Endothelial cell of umbilical vein (primary cell): ENCODE measurements at regions of chr15 and their contacts with region 1.

Region 1: DNA sequence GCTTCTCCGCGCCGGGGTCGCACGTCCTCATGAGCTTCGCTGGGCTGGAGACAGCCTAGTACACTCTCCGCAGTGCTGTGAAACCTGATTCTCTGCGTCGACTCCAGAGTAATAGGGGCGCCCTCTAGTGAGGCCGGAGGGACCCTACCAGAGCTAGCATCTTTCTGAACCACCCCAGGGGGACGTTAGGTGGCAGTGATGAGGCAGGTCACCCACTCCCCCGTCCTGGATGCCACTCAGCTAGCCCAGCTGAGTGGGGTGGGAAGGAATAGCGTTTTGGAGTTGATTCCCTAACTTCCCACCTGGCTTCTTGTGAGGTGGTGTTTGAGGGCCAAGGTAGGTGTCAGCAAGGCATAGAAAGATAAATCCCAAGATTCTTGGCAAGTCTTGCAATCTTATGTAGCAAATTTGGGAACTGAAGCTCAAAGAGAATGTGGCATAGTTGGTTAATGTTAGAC is 4.0 kb downstream of the DUOXA2 start:
- DNase-seq: peak; percentile 92
- H3K4me3 ChIP-seq: peak overlapping the region in 1 of 3 experiments; percentile 22
- H3K27ac ChIP-seq: no peak overlapping the region
- H3K4me1 ChIP-seq: peaks cover 10% of the 10 kb centered on the region
- H3K27me3 ChIP-seq: peaks cover 46 to 47% of the 10 kb centered on the region in 2 experiments
- CTCF ChIP-seq: peak; percentile 100
- POLR2A ChIP-seq: no peak

Region 2: DNA sequence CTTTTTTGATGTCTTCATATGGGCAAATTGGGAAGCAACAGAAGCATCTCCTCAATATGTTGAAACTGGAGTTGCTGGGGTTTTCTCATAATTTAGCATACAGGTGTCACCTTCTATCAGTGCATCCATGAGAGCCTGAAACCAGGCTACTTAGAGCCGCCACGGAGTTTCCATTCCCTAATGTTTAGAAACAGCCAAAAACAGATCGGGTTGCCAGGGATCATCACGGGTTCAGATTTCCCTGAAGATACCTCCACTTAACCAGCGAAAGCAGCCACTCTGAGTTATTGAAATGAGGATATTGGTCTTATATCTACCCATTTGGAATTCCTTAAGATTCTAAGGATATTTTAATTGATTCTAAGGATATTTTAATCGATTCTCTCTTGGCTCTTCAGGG is 147.1 kb before region 1 on chr15:
- CTCF ChIA-PET with region 1: interaction called, 45 read pairs
- POLR2A ChIA-PET with region 1: no interaction called
- dilution Hi-C with region 1: no loop called
- intact Hi-C with region 1: loop called (anchors 5 kb)
- DNase-seq: no peak
- H3K4me3 ChIP-seq: no peak overlapping the region
- H3K27ac ChIP-seq: no peak overlapping the region
- H3K4me1 ChIP-seq: no peaks in the 10 kb centered on the region
- H3K27me3 ChIP-seq: no peaks in the 10 kb centered on the region
- CTCF ChIP-seq: no peak
- POLR2A ChIP-seq: no peak

Region 3: DNA sequence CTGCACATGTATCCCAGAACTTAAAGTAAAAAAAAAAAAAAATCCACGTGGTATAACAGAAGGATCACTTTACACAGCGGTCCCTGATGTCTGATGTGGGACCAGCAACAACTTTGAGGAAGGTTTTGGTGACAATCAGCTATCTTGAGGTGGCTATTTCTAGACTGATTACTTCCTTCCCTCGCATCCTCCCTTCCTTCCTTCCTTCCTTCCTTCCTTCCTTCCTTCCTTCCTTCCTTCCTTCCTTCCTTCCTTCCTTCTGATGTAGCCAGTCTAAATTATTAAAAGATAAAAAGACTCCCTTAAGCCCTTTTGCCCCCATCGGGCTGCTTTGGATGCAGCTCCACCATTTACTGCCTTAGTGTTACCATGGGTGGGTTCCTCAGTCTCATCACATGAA is 80.2 kb before region 1 on chr15:
- CTCF ChIA-PET with region 1: interaction called, 10 read pairs
- POLR2A ChIA-PET with region 1: no interaction called
- dilution Hi-C with region 1: no loop called
- intact Hi-C with region 1: loop called (anchors 5 kb)
- DNase-seq: no peak
- H3K4me3 ChIP-seq: no peak overlapping the region
- H3K27ac ChIP-seq: no peak overlapping the region
- H3K4me1 ChIP-seq: peaks cover 5% of the 10 kb centered on the region
- H3K27me3 ChIP-seq: no peaks in the 10 kb centered on the region
- CTCF ChIP-seq: no peak
- POLR2A ChIP-seq: no peak

Region 4: GRCh38 chr15:45097461-45097860 is 20.7 kb before region 1 on chr15:
- CTCF ChIA-PET with region 1: interaction called, 10 read pairs
- POLR2A ChIA-PET with region 1: no interaction called
- dilution Hi-C with region 1: no loop called
- intact Hi-C with region 1: no loop called
- DNase-seq: no peak
- H3K4me3 ChIP-seq: no peak overlapping the region
- H3K27ac ChIP-seq: no peak overlapping the region
- H3K4me1 ChIP-seq: no peaks in the 10 kb centered on the region
- H3K27me3 ChIP-seq: peaks cover 3 to 16% of the 10 kb centered on the region in 2 experiments
- CTCF ChIP-seq: no peak
- POLR2A ChIP-seq: no peak

Region 5: GRCh38 chr15:45134682-45135604 is 16.8 kb after region 1 on chr15:
- CTCF ChIA-PET with region 1: interaction called, 22 read pairs
- POLR2A ChIA-PET with region 1: no interaction called
- dilution Hi-C with region 1: no loop called
- intact Hi-C with region 1: no loop called
- DNase-seq: no peak
- H3K4me3 ChIP-seq: no peak overlapping the region
- H3K27ac ChIP-seq: no peak overlapping the region
- H3K4me1 ChIP-seq: no peaks in the 10 kb centered on the region
- H3K27me3 ChIP-seq: peaks cover 57 to 61% of the 10 kb centered on the region in 2 experiments
- CTCF ChIP-seq: peak in 1 of 2 donors; percentile 25
- POLR2A ChIP-seq: no peak

Region 6: DNA sequence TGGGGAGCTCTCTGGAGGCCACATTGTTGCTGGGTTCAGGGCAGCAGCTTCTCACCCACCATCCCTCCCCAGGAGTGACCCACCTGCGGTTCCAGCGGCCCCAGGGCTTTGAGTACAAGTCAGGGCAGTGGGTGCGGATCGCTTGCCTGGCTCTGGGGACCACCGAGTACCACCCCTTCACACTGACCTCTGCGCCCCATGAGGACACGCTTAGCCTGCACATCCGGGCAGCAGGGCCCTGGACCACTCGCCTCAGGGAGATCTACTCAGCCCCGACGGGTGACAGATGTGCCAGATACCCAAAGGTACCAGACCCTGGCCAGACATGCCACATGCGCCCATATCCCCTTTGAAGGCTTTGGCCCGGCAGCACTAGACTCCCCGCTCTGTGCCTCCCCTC is 43.5 kb after region 1 on chr15:
- CTCF ChIA-PET with region 1: interaction called, 12 read pairs
- POLR2A ChIA-PET with region 1: no interaction called
- dilution Hi-C with region 1: no loop called
- intact Hi-C with region 1: no loop called
- DNase-seq: no peak
- H3K4me3 ChIP-seq: no peak overlapping the region
- H3K27ac ChIP-seq: no peak overlapping the region
- H3K4me1 ChIP-seq: peaks cover 3% of the 10 kb centered on the region
- H3K27me3 ChIP-seq: no peaks in the 10 kb centered on the region
- CTCF ChIP-seq: no peak
- POLR2A ChIP-seq: no peak

Region 7: GRCh38 chr15:45212493-45212892 is 94.3 kb after region 1 on chr15:
- CTCF ChIA-PET with region 1: no interaction called
- POLR2A ChIA-PET with region 1: no interaction called
- dilution Hi-C with region 1: no loop called
- intact Hi-C with region 1: no loop called
- DNase-seq: no peak
- H3K4me3 ChIP-seq: no peak overlapping the region
- H3K27ac ChIP-seq: no peak overlapping the region
- H3K4me1 ChIP-seq: no peaks in the 10 kb centered on the region
- H3K27me3 ChIP-seq: peaks cover 2 to 6% of the 10 kb centered on the region in 2 experiments
- CTCF ChIP-seq: no peak
- POLR2A ChIP-seq: no peak